Mammary epithelial cell (primary cell): ENCODE measurements at regions of chr17 and their contacts with region 1.

Region 1: GRCh38 chr17:6279659-6280058 is 155.3 kb downstream of the AIPL1 start:
- DNase-seq: peak; percentile 88
- H3K4me3 ChIP-seq: no peak overlapping the region
- H3K27ac ChIP-seq: no peak overlapping the region
- H3K4me1 ChIP-seq: no peaks in the 10 kb centered on the region
- H3K27me3 ChIP-seq: no peaks in the 10 kb centered on the region
- CTCF ChIP-seq: peak; percentile 89 to 94

Region 2: GRCh38 chr17:5592382-5592781 is 687.3 kb before region 1 on chr17:
- CTCF ChIA-PET with region 1: no interaction called
- dilution Hi-C with region 1: no loop called
- in situ Hi-C with region 1: loop called (anchors 5 kb)
- intact Hi-C with region 1: loop called (anchors 1 kb)
- DNase-seq: peak; percentile 31
- H3K4me3 ChIP-seq: no peak overlapping the region
- H3K27ac ChIP-seq: no peak overlapping the region
- H3K4me1 ChIP-seq: no peaks in the 10 kb centered on the region
- H3K27me3 ChIP-seq: peaks cover 5% of the 10 kb centered on the region
- CTCF ChIP-seq: peak; percentile 42 to 51

Region 3: GRCh38 chr17:5759501-5759925 is 520.1 kb before region 1 on chr17:
- CTCF ChIA-PET with region 1: interaction called, 12 read pairs
- dilution Hi-C with region 1: no loop called
- in situ Hi-C with region 1: no loop called
- intact Hi-C with region 1: no loop called
- DNase-seq: peak; percentile 93
- H3K4me3 ChIP-seq: no peak overlapping the region
- H3K27ac ChIP-seq: no peak overlapping the region
- H3K4me1 ChIP-seq: no peaks in the 10 kb centered on the region
- H3K27me3 ChIP-seq: peaks cover 12% of the 10 kb centered on the region
- CTCF ChIP-seq: no peak

Region 4: DNA sequence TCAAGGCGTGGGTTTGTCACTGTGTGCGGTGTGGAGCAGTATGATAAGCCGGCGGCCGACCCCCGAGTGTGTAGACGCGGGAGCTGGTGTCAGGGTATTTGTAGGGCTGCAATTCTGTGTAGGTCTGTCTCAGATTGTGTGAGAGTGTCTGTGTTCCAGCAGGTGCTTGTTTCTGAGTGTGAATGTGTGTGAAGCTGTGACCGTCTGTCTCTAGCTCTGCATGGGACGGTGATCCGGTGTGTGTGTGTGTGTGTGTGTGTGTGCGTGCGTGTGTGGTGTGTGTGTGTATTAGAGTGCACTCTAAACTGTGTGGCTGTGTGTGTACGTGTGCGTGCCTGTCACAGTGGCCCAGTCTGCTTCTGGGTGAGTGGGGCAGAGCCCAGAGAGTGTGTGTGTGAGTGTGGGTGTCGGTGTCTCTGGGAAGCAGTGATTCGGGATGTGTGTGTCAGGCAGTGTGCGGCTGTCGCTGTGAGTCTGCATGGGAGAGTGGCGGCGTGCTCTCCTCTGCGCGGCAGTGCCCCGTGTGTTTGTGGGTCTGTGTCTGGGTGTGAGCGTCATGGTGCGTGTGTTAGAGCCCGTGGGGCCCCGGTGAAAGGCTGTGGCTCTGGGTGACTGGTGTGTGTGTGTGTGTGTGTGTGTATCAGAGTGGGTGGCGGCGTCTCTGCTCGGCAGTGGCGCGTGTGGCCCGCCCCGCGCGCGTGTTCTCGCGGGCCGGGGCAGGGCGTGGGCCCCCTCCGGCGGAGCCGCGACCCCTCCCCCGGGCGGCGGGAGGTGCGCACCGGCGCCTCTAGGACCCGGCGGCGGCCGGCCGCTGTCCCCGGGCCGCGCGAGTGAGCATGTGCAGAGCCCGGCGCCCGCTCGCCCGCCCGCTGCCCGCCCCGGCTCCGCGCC is 209.9 kb before region 1 on chr17 and contains the start of gene WSCD1:
- CTCF ChIA-PET with region 1: no interaction called
- dilution Hi-C with region 1: no loop called
- in situ Hi-C with region 1: no loop called
- intact Hi-C with region 1: loop called (anchors 10 kb)
- DNase-seq: no peak
- H3K4me3 ChIP-seq: no peak within 1 kb of the TSS
- H3K27ac ChIP-seq: no peak within 1 kb of the TSS
- H3K4me1 ChIP-seq: no peaks in the 10 kb centered on the region
- H3K27me3 ChIP-seq: peaks cover 18% of the 10 kb centered on the region
- CTCF ChIP-seq: no peak
- total RNA-seq, gene WSCD1: not detected

Region 5: DNA sequence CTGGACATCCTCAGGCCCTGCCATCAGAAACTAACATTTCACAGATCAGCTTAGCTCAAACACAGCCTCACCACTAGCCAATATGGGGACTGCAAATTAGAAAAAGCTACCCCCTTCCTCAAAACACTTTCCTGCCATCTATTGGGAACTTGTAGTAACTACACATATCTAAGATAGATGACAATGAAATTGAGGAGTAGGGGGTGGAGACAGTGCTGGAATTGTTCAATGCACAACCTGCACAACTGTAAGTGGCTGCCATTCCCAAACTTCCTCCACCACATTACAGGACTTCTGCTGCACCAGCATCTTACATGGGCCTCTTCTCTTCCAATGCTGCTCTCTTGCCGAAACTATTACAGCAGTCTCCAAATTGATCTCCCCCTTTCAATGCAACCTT is 133.4 kb after region 1 on chr17:
- CTCF ChIA-PET with region 1: no interaction called
- dilution Hi-C with region 1: no loop called
- in situ Hi-C with region 1: loop called in 1 of 2 experiments (anchors 10 kb)
- intact Hi-C with region 1: loop called (anchors 1 kb)
- DNase-seq: peak; percentile 41
- H3K4me3 ChIP-seq: no peak overlapping the region
- H3K27ac ChIP-seq: no peak overlapping the region
- H3K4me1 ChIP-seq: no peaks in the 10 kb centered on the region
- H3K27me3 ChIP-seq: peaks cover 4% of the 10 kb centered on the region
- CTCF ChIP-seq: peak; percentile 54 to 67

Region 6: GRCh38 chr17:6831661-6832263 is 552.1 kb after region 1 on chr17 and contains the start of gene TEKT1:
- CTCF ChIA-PET with region 1: no interaction called
- dilution Hi-C with region 1: no loop called
- in situ Hi-C with region 1: no loop called
- intact Hi-C with region 1: no loop called
- DNase-seq: peak; percentile 76
- H3K4me3 ChIP-seq: peak within 1 kb of the TSS; percentile 36 to 57 (median 54)
- H3K27ac ChIP-seq: peak within 1 kb of the TSS; percentile 31
- H3K4me1 ChIP-seq: peaks cover 6% of the 10 kb centered on the region
- H3K27me3 ChIP-seq: peaks cover 2% of the 10 kb centered on the region
- CTCF ChIP-seq: no peak
- total RNA-seq, gene TEKT1: not detected